ENCODE measurements at regions of chr16 and their contacts with region 1.

Region 1: GRCh38 chr16:87834623-87835407 is 34.5 kb downstream of the SLC7A5 start:
- DNase-seq: peak; percentile 50
- H3K4me3 Mint-ChIP-seq: no peak overlapping the region
- H3K27ac Mint-ChIP-seq: no peak overlapping the region
- H3K4me1 Mint-ChIP-seq: no peaks in the 10 kb centered on the region
- H3K27me3 Mint-ChIP-seq: no peaks in the 10 kb centered on the region
- CTCF ChIP-seq: no peak

Region 2: DNA sequence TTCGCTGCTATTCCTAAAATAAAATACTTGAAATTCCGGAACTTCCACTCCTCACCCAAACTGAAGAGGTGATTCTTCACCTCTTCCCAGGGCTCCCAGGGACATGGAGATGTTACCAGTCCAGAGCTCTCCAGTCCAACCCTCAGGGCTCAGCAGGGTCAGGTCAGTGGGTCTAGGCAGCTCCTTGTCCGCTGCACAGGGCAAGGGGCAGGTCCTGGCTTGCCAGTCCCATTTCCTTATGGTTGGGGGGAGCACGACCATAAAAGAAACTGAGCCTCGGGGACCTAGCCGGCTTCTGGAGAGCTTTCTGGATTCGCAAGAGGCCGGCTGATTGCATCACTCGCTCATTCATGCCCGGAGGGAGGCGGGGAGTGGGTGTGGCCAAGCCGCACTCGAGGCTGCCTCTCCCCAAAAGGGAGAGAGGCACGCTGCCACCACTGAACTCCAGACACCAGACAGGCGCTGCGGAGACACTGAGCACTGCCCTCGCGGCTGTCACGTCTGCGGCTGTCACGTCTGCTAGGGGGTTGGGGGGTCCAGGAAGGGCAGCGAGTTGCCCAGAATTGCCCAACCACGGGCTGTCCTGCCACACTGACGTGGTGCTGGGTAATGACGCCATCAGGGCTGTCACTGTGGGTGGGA is 18.7 kb after region 1 on chr16:
- CTCF ChIA-PET with region 1: interaction called, 63 read pairs
- POLR2A ChIA-PET with region 1: interaction called, 6 read pairs
- intact Hi-C with region 1: no loop called
- DNase-seq: peak; percentile 96
- H3K4me3 Mint-ChIP-seq: peak overlapping the region; percentile 52
- H3K27ac Mint-ChIP-seq: peak overlapping the region; percentile 83
- H3K4me1 Mint-ChIP-seq: peaks cover 36% of the 10 kb centered on the region
- H3K27me3 Mint-ChIP-seq: no peaks in the 10 kb centered on the region
- CTCF ChIP-seq: no peak